ENCODE measurements at regions of chr9 and their contacts with region 1.

Region 1: DNA sequence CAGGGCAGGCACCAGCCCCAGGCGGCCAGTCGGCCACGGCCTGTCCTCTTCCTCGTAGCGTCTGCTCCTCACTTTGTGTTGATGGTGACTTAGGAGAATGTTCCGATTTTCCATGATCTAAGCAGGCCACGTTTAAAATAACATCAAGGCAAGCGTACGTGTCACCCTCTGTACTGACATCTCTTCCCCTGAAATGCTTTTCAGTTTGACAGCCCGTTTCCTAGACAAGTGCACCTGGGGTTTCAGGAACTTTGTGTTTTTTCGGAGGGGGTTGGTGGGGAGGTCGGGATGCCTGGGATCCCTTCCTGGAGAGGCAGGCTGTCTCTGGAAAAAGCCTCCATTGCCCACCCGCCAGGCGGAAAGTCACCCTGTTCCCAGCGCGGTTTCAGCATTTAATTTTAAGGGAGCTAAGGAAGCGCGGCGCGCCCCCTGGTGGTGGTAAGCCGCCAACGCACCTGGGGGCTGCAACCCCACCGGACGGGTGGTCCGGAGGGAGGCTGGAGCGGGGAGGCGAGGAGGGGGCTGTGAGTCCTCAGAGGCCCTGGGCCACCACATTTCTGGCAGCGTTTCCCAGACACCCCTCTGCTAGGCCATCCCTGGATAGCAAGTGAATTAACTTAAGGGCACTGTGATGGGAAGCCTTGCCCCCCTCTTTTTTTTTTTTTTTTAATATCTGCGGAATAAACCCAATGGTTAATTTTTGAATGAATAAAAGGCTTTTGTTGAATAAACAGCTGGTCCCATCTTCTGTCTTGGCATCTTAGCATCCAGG is 29.5 kb upstream of the HMCN2 start:
- DNase-seq: peak; percentile 92

Region 2: GRCh38 chr9:129875181-129875611 is 360.9 kb before region 1 on chr9:
- intact Hi-C with region 1: loop called in 1 of 2 experiments (anchors 10 kb)
- DNase-seq: no peak

Region 3: DNA sequence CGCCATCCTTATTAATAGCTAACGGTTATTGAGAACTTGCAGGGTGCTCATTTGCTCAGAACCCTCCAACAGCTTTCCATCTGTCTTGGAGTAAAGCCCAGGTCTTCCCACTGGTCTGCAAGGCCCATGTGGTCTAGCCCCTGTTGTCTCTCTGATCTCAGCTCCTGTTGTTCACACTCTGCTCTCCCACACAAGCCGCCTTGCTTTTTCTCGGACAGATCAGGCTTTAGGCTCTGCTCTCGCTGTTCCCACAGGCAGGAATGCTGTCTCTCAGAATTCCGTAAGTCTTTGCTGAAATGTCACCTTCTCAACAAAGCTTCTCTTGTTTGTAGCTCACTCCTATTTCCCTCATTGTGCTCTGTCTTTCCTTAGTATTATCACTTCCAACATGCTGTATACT is 148.0 kb before region 1 on chr9:
- intact Hi-C with region 1: no loop called
- DNase-seq: no peak

Region 4: GRCh38 chr9:130107234-130107861 is 128.7 kb before region 1 on chr9:
- intact Hi-C with region 1: loop called (anchors 5 kb)
- DNase-seq: peak; percentile 96

Region 5: GRCh38 chr9:130186839-130187522 is 49.1 kb before region 1 on chr9:
- intact Hi-C with region 1: loop called in 1 of 2 experiments (anchors 10 kb)
- DNase-seq: peak; percentile 86

Region 6: GRCh38 chr9:130213903-130214761 is 22.0 kb before region 1 on chr9:
- intact Hi-C with region 1: no loop called
- DNase-seq: no peak

Region 7: DNA sequence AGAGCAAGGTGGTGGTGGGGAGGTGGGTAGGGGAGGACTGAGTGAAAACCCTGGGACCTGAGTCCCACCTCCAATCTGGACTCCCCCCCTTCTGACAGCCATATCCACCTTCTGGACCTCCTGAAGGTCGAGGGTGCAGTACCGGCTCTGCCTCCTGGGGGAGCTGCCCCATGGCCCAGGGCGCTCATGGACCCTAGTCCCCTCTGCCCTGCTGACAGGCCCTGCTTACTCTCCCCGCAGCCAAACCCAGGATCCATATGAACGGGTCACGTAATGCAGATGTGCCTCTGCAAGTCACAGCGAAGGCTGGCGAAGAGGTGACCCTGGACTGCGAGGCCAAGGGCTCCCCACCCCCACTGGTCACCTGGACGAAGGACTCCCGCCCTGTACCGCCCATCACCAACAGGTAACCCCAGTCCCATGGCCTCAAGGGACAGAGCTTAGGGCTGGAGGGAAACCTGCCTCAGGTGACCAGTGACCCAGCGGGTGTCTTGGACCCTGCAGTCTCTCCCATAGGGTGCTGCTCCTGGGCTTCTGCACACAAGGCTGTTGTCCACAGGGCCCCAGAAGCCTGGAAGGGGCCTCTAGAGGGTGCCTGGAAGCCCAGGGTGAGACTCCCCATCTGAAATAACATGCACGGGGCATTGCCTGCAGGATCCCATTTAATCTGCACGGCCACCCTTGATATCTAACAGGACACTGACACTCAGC is 91.1 kb after region 1 on chr9:
- intact Hi-C with region 1: no loop called
- DNase-seq: no peak

Measured in posterior vena cava (tissue), 2 donors.